Left ventricle myocardium inferior (tissue), 1 donor: ENCODE measurements at regions of chr1 and their contacts with region 1.

Region 1: DNA sequence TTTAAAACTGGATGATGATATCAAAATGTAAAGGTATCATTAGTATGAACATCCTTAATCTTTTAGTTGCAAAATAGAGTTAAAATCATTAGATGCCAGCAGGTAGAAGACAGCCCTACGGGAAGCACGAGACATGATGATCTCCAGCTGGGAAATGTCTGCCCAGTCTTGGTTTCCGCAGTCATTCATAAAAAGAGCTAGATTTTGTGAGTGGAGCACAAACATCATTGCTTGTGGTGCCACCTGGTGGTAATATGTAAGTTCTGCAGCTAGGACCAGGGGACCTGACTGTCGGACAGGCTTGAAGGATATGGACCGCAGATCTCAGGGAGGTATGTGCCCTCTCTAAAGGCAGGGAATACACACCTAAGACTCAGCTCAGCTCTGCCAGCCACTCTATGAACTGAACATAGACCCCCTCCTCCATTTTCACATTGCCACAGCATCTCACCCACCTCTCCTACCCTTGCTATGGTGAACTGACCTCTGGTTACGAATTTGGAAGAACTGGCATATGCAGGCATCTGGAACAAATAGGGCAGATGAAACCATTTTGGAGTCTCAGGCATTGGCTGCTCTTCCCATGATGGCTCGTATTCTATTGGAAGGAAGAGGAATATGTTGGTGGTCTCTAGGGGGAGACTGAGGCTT is 9.2 kb downstream of the FCMR start:
- DNase-seq: peak; percentile 40
- H3K4me3 ChIP-seq: no peak overlapping the region
- H3K27ac ChIP-seq: no peak overlapping the region
- H3K4me1 ChIP-seq: peaks cover 16% of the 10 kb centered on the region
- H3K27me3 ChIP-seq: peaks cover 65% of the 10 kb centered on the region
- CTCF ChIP-seq: peak; percentile 88

Region 2: DNA sequence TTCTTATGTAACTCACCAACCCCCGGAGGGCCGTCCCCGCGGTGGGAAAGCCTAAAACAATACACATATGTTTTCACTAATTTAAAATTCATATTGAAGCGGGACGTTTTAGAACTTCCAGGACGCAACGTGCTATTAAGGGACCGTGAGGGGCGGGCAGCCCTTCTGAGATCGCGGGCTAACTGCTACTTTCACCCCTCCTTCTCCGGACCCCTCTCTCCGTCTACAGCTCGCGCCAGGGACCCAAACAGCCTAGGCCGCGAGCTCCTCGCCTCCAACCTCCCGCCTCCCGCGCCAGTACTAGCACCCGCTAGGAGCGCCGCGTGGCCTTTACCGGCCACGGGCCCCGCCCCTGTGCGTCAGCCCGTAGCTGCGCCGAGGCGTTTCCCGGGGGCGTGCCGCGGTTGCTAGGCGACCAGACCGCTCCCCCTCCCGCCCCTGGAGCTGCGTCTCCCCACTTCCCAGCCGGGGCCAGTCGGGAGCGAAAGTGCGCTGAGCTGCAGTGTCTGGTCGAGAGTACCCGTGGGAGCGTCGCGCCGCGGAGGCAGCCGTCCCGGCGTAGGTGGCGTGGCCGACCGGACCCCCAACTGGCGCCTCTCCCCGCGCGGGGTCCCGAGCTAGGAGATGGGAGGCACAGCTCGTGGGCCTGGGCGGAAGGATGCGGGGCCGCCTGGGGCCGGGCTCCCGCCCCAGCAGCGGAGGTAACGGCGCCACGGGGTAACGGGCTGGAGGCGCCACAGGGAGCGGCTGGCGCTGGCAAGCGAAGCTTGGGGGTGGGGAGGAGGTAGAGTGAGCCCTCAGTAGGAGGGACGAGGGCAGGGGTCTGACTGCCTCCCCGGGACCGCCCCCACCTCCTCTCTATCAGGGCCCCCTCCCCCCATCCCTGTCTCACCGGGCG is 277.2 kb before region 1 on chr1 and contains the start of gene DYRK3:
- intact Hi-C with region 1: loop called (anchors 10 kb)
- DNase-seq: peak; percentile 96
- H3K4me3 ChIP-seq: peak within 1 kb of the TSS; percentile 98
- H3K27ac ChIP-seq: peak within 1 kb of the TSS; percentile 91
- H3K4me1 ChIP-seq: peaks cover 61% of the 10 kb centered on the region
- H3K27me3 ChIP-seq: no peaks in the 10 kb centered on the region
- CTCF ChIP-seq: peak; percentile 30
- total RNA-seq, gene DYRK3: 26.6 TPM

Region 3: GRCh38 chr1:206734499-206735142 is 177.9 kb before region 1 on chr1:
- intact Hi-C with region 1: loop called (anchors 10 kb)
- DNase-seq: no peak
- H3K4me3 ChIP-seq: no peak overlapping the region
- H3K27ac ChIP-seq: peak overlapping the region; percentile 19
- H3K4me1 ChIP-seq: peaks cover 77% of the 10 kb centered on the region
- H3K27me3 ChIP-seq: no peaks in the 10 kb centered on the region
- CTCF ChIP-seq: peak; percentile 76